ENCODE measurements at regions of chr1 and their contacts with region 1.

Region 1: DNA sequence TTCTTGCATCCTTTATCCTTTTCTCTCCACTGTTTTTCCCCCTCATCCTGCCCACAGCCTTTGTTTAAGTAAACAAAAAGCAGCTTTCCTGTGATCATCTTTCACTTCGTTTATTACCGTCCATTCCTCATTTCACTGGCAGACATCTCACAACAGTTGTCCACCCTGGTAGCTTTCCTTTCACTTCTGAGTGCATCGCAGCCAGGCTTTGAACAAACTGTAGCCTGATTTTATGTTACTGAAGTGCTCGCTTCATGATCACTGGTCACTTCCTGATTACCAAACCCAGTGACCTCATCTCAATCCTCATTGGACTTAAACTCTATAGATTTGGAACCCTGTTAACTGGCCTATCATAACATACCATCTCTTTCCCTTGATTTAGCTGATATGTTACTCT is 67.7 kb downstream of the SDCCAG8 start:
- DNase-seq: no peak
- ATAC-seq: no peak

Region 2: GRCh38 chr1:242467556-242468145 is 855.8 kb before region 1 on chr1:
- intact Hi-C with region 1: loop called in 1 of 2 experiments (anchors 5 kb)
- DNase-seq: no peak
- ATAC-seq: peak; percentile 71 to 78

Measured in left cardiac atrium (tissue), 4 donors.